ENCODE measurements at regions of chr3 and their contacts with region 1.

Region 1: GRCh38 chr3:131026321-131027178 is at the starts of genes ASTE1 and NEK11:
- DNase-seq: peak; percentile 97
- H3K4me3 Mint-ChIP-seq: peak within 1 kb of the TSS; percentile 86
- H3K27ac Mint-ChIP-seq: peak within 1 kb of the TSS; percentile 97
- H3K4me1 Mint-ChIP-seq: peaks cover 29% of the 10 kb centered on the region
- H3K27me3 Mint-ChIP-seq: peaks cover 10% of the 10 kb centered on the region
- total RNA-seq, gene ASTE1: 8.7 and 9.5 TPM in 2 replicates
- total RNA-seq, gene NEK11: 1.1 and 1.5 TPM in 2 replicates

Region 2: GRCh38 chr3:130746246-130747039 is 280.1 kb before region 1 on chr3 and contains the start of gene PIK3R4:
- intact Hi-C with region 1: loop called (anchors 1 kb)
- DNase-seq: peak; percentile 99
- H3K4me3 Mint-ChIP-seq: peak within 1 kb of the TSS; percentile 90
- H3K27ac Mint-ChIP-seq: peak within 1 kb of the TSS; percentile 96
- H3K4me1 Mint-ChIP-seq: peaks cover 41% of the 10 kb centered on the region
- H3K27me3 Mint-ChIP-seq: no peaks in the 10 kb centered on the region
- total RNA-seq, gene PIK3R4: 30.8 and 34.7 TPM in 2 replicates

Region 3: DNA sequence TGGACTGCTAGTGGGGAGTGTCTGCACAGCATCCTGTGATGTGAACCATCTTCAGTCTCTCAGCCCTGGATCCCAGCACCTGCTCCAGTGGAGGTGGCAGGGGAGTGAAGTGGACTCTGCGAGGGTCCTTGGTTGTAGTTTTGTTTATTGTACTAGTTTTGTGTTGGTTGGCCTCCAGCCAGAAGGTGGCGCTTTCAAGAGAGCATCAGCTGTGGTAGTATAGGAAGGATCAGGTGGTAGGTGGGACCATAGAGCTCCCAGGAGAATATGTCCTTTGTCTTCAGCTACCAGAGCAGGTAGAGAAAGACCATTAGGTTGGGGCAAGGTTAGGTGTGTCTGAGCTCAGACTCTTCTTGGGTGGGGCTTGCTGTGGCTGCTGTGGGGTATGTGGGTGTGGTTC is 21.0 kb after region 1 on chr3:
- intact Hi-C with region 1: loop called (anchors 2 kb)
- DNase-seq: no peak
- H3K4me3 Mint-ChIP-seq: no peak overlapping the region
- H3K27ac Mint-ChIP-seq: no peak overlapping the region
- H3K4me1 Mint-ChIP-seq: peaks cover 12% of the 10 kb centered on the region
- H3K27me3 Mint-ChIP-seq: peaks cover 23% of the 10 kb centered on the region

Region 4: GRCh38 chr3:131502530-131503245 is 476.1 kb after region 1 on chr3 and contains the start of gene MRPL3:
- intact Hi-C with region 1: loop called (anchors 1 kb)
- DNase-seq: peak; percentile 95
- H3K4me3 Mint-ChIP-seq: peak within 1 kb of the TSS; percentile 100
- H3K27ac Mint-ChIP-seq: peak within 1 kb of the TSS; percentile 98
- H3K4me1 Mint-ChIP-seq: peaks cover 30% of the 10 kb centered on the region
- H3K27me3 Mint-ChIP-seq: no peaks in the 10 kb centered on the region
- total RNA-seq, gene MRPL3: 175 and 189 TPM in 2 replicates

Region 5: DNA sequence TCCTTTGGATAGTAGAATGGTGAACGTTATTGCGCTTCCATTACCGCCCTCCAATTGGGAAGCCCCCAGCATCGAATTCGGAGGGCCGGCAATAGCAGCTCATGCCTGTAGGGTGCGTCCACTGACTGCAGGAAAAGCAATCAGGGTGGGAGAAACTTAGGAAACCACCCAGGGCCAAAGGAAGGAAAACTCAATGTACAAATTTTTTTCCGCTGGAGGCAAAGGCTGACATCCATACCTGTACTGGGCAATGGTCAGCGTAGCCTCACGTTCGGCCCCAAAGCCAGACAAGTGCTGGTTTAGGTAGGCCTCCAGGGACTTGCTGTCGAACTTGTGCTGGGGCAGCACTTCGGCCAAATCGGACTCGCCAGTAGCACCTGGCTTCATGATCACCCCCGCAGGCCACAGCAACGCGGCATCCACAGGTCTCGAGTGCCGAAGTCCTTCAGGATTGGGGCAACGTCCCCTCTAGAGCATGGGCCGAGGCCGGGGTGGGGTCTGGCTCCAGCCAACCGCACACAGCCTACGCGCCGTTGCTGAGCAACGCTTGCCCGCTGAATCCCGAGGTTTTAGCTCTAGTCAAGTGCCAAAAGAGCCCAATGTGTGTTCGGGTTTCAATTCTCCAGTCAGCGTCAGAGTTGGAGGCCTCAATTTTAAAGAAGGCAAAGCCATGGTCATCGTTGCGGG is 1633.0 kb after region 1 on chr3 and contains the start of gene ACAD11:
- intact Hi-C with region 1: loop called (anchors 10 kb)
- DNase-seq: peak; percentile 76
- H3K4me3 Mint-ChIP-seq: peak within 1 kb of the TSS; percentile 99
- H3K27ac Mint-ChIP-seq: peak within 1 kb of the TSS; percentile 98
- H3K4me1 Mint-ChIP-seq: peaks cover 39% of the 10 kb centered on the region
- H3K27me3 Mint-ChIP-seq: no peaks in the 10 kb centered on the region
- total RNA-seq, gene ACAD11: 12.9 and 18.9 TPM in 2 replicates

Measured in activated CD4-positive, alpha-beta T cell treated with anti-CD3 and anti-CD28 coated beads, Interleukin-2, amount 10 ng/mL, durations not matched to agents 24 days and 14 days (primary cell).